ENCODE measurements at regions of chr3 and their contacts with region 1.

Region 1: GRCh38 chr3:36700537-36701248 is 63.7 kb downstream of the DCLK3 start:
- DNase-seq: peak; percentile 74 to 78
- H3K4me3 ChIP-seq: no peak overlapping the region
- H3K4me1 ChIP-seq: 0 out of 2 replicates have a peak, but pooled peaks cover 6% of the 10 kb centered on the region
- H3K27me3 ChIP-seq: no peaks in the 10 kb centered on the region; the same call in 1 of the 2 replicates

Region 2: DNA sequence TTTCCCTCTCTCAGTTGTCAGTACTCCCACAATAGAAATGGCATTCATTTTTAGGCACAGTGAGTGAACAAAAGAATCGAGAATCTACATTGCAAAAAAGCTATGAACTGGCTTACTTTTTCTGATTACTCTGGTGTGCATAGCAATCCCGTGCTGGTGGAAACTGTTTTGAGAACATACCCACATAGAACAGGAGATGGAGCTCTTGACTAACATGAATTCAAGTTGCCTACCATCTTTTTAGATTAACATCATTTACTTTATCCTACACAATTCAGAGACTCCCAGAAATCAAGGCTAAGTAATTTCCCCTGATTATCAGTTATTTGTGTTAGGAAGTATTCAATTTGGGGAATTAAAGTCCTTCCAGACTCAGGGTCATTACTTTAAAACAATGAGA is 734.8 kb before region 1 on chr3:
- in situ Hi-C with region 1: loop called (anchors 10 kb)
- DNase-seq: peak; percentile 42 to 72
- H3K4me3 ChIP-seq: no peak overlapping the region
- H3K4me1 ChIP-seq: peaks cover 18% of the 10 kb centered on the region
- H3K27me3 ChIP-seq: no peaks in the 10 kb centered on the region

Region 3: GRCh38 chr3:36124118-36124796 is 576.4 kb before region 1 on chr3:
- in situ Hi-C with region 1: loop called (anchors 25 kb)
- DNase-seq: peak in 1 of 2 experiments; percentile 39
- H3K4me3 ChIP-seq: no peak overlapping the region
- H3K4me1 ChIP-seq: no peaks in the 10 kb centered on the region
- H3K27me3 ChIP-seq: no peaks in the 10 kb centered on the region

Region 4: GRCh38 chr3:37227870-37228549 is 527.3 kb after region 1 on chr3:
- in situ Hi-C with region 1: no loop called
- DNase-seq: peak in 1 of 2 experiments; percentile 15
- H3K4me3 ChIP-seq: no peak overlapping the region
- H3K4me1 ChIP-seq: no peaks in the 10 kb centered on the region
- H3K27me3 ChIP-seq: peaks cover 2% of the 10 kb centered on the region; the same call in 1 of the 2 replicates